ENCODE measurements at regions of chr1 and their contacts with region 1.

Region 1: DNA sequence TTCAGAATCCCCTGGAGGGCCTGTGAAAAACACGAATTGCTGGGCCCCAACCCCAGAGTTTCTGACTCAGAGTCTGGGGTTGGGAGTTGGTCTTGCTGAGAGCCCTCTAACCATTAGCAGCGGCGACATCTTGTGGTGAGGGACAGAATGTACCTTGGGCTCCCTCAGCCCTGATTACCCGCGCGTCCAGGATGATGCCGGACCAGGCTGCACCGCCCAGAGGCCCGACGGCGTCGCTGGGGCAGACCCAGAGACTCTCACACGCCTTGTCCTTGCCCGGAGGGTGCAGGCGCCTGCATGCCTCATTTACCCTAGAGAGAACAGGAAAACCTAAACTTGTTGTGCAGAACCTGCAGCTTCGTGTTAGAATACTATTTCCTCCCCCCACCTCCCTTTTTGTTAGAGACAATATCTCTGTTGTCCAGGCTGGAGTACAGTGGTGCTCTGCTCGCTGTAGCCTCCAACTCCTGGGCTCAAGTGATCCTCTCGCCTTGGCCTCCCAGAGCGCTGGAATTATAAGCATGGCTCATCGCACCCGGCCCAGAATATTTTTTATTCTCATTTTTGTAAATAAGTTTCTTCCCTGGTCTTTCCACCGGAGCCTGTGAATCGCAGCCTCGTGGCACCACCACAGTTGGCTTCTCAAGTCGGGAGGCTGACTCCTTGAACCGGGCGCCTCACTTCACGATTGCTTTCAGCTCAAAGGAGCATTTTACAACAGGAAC is 22.2 kb upstream of the RD3 start:
- DNase-seq: peak; percentile 90
- H3K4me3 Mint-ChIP-seq: peak overlapping the region; percentile 23
- H3K27ac Mint-ChIP-seq: no peak overlapping the region
- H3K4me1 Mint-ChIP-seq: peaks cover 23% of the 10 kb centered on the region
- H3K27me3 Mint-ChIP-seq: no peaks in the 10 kb centered on the region

Region 2: DNA sequence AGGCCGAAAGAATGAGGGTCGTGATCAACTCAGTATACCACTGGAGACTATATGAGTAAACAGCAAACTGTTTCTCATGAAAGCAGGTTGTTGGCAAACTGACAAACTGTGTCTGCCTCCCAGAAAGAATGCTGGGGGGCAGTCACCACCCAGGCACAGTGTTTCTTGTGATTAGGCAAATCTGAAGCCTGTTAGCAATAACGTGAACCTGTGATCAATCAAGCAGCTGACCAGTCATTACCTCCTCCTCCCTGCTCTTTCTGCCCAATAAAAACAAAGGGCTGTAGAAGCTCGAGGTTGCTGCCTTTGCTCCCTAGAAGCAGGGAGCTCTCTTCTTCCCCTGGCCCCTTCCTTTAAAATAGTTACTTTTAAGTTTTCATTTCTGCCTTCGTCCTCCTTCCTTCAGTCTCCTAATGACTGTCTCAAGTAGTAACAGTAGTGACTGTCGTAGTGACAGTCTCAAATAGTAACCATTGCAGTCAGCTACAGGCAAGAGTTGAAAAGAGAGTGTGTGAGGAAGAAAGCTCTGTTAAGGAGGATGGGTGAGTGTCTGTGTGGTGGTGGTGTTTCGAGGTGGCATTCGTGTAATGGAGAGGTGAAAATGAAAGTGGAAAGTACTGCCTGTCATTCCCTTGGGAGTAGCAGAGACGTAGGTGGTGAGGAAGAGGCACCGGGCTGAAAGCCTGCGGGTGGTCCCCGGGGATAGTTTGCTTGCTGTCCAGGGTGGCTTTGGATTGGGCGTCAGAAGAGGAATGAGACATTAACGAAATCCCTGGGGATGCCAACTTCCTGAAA is 1171.0 kb before region 1 on chr1:
- CTCF ChIA-PET with region 1: no interaction called
- intact Hi-C with region 1: loop called (anchors 10 kb)
- DNase-seq: no peak
- H3K4me3 Mint-ChIP-seq: no peak overlapping the region
- H3K27ac Mint-ChIP-seq: no peak overlapping the region
- H3K4me1 Mint-ChIP-seq: peaks cover 40% of the 10 kb centered on the region
- H3K27me3 Mint-ChIP-seq: no peaks in the 10 kb centered on the region

Region 3: DNA sequence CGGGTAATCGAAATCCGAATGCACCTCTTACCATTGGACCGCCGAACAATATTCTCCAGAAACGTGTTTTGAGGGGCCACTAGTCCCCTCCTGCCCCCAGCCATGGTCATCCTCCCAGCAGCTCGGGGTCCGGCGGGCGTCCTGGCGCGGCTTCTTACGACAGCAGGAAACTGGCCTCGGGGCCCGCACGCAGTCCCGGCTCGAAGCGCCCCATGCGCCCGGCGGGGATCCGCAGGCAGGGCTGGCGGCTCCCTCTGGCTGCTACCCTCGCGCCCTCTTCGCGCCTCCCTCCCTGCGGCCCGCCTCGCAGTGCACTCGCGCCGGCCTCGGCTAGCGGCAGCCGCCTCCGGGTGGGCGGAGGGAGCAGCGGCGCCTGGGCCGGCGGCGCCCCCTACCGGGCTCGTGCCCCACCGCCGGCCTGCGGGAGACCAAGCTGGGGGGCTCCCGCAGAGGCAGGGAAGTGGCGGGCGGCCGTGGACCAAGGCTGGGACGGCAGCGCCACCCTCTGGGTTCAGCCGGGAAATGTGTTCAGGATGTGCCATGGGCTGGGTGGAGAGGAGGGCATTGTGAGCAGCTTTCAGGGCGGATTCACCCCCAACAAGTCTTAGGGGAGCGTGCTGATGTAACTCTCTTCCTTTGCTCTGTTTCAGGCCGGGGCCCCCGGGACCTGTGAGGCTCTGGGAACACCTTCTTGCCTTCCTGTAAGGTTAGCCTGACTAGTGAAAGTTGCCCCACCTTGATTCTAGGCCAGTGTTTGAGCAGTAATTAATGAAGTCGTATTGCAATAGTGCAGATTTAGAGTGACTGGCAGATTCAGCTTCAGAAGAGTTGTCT is 380.1 kb before region 1 on chr1 and contains the start of gene KCNH1:
- CTCF ChIA-PET with region 1: interaction called, 4 read pairs
- intact Hi-C with region 1: loop called (anchors 1 kb)
- DNase-seq: peak; percentile 90
- H3K4me3 Mint-ChIP-seq: peak within 1 kb of the TSS; percentile 66
- H3K27ac Mint-ChIP-seq: no peak within 1 kb of the TSS
- H3K4me1 Mint-ChIP-seq: peaks cover 7% of the 10 kb centered on the region
- H3K27me3 Mint-ChIP-seq: peaks cover 50% of the 10 kb centered on the region
- total RNA-seq, gene KCNH1: not detected

Region 4: DNA sequence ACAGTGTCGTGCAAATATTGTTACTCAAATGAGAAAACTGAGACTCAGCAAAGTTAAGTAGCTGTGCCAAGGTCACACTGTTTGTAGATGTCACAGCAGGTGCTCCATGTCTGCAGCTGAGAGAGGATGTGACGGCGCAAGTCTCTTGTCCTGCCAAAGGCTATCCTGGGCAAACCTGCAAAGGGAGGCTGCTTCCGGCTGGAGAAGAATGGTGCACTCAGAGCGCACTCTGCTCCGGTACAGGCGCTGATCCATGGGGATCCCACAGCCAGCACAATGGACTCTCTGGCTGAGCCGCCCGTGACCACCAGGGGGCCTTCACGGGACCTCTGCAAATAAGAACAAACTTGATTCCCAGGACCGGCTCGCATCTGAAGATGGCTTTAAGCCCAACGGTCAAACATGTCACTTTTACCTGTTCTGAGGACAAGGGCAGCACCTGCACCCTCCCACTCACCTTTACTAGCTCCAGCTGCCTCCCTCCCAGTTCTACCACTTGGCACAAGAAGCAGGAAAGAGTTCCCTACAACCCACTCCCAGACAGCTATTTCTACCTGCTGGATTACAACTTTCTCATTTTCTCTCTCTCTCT is 44.2 kb before region 1 on chr1:
- CTCF ChIA-PET with region 1: interaction called, 31 read pairs
- intact Hi-C with region 1: loop called (anchors 1 kb)
- DNase-seq: peak; percentile 54
- H3K4me3 Mint-ChIP-seq: no peak overlapping the region
- H3K27ac Mint-ChIP-seq: no peak overlapping the region
- H3K4me1 Mint-ChIP-seq: no peaks in the 10 kb centered on the region
- H3K27me3 Mint-ChIP-seq: peaks cover 2% of the 10 kb centered on the region

Region 5: DNA sequence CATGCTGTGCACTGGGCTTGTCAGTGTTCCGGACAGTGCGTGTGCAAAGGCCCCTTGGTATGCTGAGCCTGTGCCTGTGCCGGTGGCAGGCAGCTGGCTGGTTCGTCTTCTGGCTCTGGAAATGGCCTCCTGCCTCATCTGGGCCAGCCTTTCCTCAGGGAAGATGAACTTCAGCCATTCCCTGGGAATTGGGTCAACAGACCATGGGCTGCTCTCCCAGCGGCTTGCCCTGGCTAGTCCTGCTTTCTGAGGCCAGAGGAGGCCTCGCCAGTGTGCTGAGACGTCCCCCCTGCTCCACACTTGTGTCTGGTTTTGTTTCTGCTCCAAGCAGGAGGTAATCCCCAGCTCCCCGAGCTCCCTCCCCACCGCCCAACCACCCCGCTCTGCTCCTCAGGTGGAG is 10.3 kb after region 1 on chr1:
- CTCF ChIA-PET with region 1: interaction called, 13 read pairs
- intact Hi-C with region 1: no loop called
- DNase-seq: no peak
- H3K4me3 Mint-ChIP-seq: no peak overlapping the region
- H3K27ac Mint-ChIP-seq: no peak overlapping the region
- H3K4me1 Mint-ChIP-seq: peaks cover 13% of the 10 kb centered on the region
- H3K27me3 Mint-ChIP-seq: no peaks in the 10 kb centered on the region

Region 6: DNA sequence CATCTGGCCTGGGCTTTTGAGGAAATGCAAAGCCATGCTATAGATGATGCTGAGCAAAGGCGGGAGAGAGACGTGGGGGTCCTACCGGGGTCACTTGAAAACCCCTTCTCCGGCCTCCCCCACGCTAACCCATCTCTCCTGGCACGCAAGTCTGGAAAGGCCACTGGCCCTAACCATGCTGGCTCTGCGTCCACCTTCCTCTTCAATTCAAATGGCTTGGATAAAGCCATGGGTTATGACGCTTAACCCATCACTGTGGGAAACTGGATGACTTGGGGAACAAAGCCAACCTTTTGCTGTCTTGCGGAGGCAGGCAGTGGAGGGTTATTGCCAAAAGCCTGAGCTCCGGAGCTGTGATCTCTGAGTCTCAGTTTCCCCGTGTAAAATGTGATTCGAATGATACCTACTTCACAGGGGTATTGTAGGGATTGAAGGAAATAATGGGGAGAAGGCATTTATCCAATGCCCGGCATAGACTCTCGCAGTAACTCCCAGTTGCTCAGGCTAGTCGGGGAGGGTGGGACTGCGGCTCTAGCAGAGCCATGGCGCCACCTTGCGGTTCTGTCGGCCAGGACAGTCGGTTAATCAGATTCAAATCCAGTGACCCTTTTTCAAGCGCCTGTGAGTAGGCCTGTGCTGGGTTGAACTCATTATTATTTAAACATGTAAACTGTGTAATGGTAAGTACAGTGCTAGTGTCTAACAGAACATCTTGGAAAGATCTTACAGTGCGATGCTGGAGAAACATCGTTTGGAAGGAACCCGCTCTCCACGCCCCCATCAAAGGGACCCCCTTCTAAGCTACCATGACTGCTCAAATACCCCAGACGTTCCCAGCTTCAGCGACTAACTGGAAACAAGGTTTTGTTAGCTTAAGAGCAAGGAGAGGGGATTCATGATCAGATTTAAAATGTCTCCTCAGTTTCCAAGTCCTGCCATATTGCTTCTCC is 140.9 kb after region 1 on chr1:
- CTCF ChIA-PET with region 1: interaction called, 41 read pairs
- intact Hi-C with region 1: loop called (anchors 1 kb)
- DNase-seq: peak; percentile 89
- H3K4me3 Mint-ChIP-seq: no peak overlapping the region
- H3K27ac Mint-ChIP-seq: no peak overlapping the region
- H3K4me1 Mint-ChIP-seq: no peaks in the 10 kb centered on the region
- H3K27me3 Mint-ChIP-seq: no peaks in the 10 kb centered on the region